CD8-positive, alpha-beta memory T cell (primary cell): ENCODE measurements at regions of chr6 and their contacts with region 1.

Region 1: DNA sequence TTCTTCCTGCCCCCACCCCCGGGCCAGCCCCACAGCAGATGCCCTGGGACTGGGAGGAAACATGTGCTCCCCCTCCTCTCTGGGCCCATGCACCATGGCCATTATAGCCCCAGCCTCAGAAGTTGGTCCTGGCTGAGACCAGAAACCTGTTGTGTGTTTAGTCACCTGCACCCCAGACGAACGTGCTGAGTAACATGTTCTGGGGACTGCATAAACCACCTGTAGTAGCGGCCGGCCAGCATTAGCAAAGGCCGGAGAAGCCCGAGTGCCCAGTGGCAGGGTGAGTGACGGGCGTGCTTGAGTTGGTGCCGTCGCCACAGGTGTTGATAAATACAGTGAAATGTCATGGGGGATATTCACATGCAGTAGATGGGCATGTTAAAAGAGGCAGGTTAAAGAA is 73.9 kb downstream of the TCP11 start:
- DNase-seq: no peak
- H3K4me3 ChIP-seq: no peak overlapping the region
- H3K4me3 Mint-ChIP-seq: no peak overlapping the region
- H3K27ac ChIP-seq: no peak overlapping the region
- H3K27ac Mint-ChIP-seq: no peak overlapping the region
- H3K4me1 ChIP-seq: no peaks in the 10 kb centered on the region
- H3K4me1 Mint-ChIP-seq: peaks cover 0 to 2% (median 0%) of the 10 kb centered on the region in 3 donors
- H3K27me3 ChIP-seq: no peaks in the 10 kb centered on the region
- H3K27me3 Mint-ChIP-seq: no peaks in the 10 kb centered on the region

Region 2: DNA sequence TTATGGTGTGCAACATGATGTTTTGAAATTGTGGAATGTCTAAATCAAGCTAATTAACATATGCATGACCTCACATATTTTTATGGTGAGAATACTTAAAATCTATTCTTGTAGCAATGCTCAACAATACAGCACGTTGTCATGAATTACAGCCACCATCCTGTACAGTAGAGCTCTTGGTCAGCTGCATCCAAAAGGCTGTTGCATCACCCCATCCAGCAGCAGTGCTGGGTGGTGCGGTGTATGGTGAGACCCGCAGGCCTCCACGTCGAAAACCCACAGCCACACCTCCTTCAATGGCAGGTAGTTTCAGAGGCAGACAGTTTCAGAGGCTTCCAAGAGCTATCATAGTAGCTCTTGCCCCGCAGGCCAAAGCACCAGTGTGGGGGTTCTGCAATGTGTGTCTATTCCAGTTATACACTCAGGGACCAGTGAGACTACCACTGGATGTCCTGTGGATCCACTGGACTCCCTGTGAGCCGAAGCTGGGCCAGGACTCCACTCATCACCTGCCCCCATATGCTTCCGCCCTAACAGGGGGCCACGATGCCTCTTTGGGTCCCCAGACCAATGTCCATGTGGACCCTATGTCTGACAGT is 577.9 kb before region 1 on chr6:
- CTCF ChIA-PET with region 1: no interaction called
- POLR2A ChIA-PET with region 1: interaction called, 13 read pairs
- DNase-seq: no peak
- H3K4me3 ChIP-seq: no peak overlapping the region
- H3K4me3 Mint-ChIP-seq: no peak overlapping the region
- H3K27ac ChIP-seq: no peak overlapping the region
- H3K27ac Mint-ChIP-seq: peak overlapping the region in 3 of 8 donors; percentile 59 to 61 (median 60)
- H3K4me1 ChIP-seq: peaks cover 24% of the 10 kb centered on the region
- H3K4me1 Mint-ChIP-seq: peaks cover 32 to 46% (median 38%) of the 10 kb centered on the region in 3 donors
- H3K27me3 ChIP-seq: no peaks in the 10 kb centered on the region
- H3K27me3 Mint-ChIP-seq: peaks cover 0 to 1% of the 10 kb centered on the region in 2 donors